ENCODE measurements at regions of chr1 and their contacts with region 1.

Region 1: DNA sequence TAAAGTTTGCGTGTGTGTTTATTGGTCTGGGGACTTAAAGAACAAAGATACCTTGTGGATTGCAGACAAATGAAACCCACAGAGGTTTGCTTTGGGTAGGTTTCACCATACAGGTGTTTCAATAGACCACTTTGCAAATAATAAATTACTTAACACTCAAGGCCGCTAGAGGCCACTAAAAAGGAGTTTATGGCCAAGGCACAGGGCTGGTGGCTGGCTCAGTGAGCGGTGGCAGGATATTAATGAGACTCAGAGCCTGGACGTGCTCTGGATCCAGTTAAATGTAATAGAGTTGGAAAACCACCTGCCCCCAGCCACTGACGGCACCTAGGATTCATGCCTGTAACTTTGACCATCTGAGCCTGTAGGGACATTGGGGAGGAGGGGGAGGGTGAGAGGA is 44.5 kb downstream of the LRRC38 start:
- DNase-seq: peak in 1 of 2 donors; percentile 66
- ATAC-seq: peak; percentile 82 to 88
- H3K4me3 ChIP-seq: no peak overlapping the region
- H3K27ac ChIP-seq: peak overlapping the region; percentile 2 to 70 (median 60)
- H3K4me1 ChIP-seq: peaks cover 0 to 2% of the 10 kb centered on the region in 2 donors
- H3K27me3 ChIP-seq: no peaks in the 10 kb centered on the region
- CTCF ChIP-seq: peak; percentile 36 to 54 (median 43)
- POLR2A ChIP-seq: no peak

Region 2: GRCh38 chr1:13523780-13524477 is 54.6 kb after region 1 on chr1:
- in situ Hi-C with region 1: no loop called
- intact Hi-C with region 1: no loop called
- DNase-seq: no peak
- ATAC-seq: no peak
- H3K4me3 ChIP-seq: no peak overlapping the region
- H3K27ac ChIP-seq: no peak overlapping the region
- H3K4me1 ChIP-seq: no peaks in the 10 kb centered on the region
- H3K27me3 ChIP-seq: no peaks in the 10 kb centered on the region
- CTCF ChIP-seq: no peak
- POLR2A ChIP-seq: no peak

Region 3: GRCh38 chr1:13570924-13571323 is 101.6 kb after region 1 on chr1:
- in situ Hi-C with region 1: loop called in 1 of 4 experiments (anchors 25 kb)
- intact Hi-C with region 1: loop called (anchors 1 kb)
- DNase-seq: no peak
- ATAC-seq: peak in 1 of 2 donors; percentile 65
- H3K4me3 ChIP-seq: no peak overlapping the region
- H3K27ac ChIP-seq: no peak overlapping the region
- H3K4me1 ChIP-seq: no peaks in the 10 kb centered on the region
- H3K27me3 ChIP-seq: no peaks in the 10 kb centered on the region
- CTCF ChIP-seq: peak; percentile 41 to 61 (median 50)
- POLR2A ChIP-seq: no peak